GM10248 (cell line): ENCODE measurements at regions of chrX and their contacts with region 1.

Region 1: DNA sequence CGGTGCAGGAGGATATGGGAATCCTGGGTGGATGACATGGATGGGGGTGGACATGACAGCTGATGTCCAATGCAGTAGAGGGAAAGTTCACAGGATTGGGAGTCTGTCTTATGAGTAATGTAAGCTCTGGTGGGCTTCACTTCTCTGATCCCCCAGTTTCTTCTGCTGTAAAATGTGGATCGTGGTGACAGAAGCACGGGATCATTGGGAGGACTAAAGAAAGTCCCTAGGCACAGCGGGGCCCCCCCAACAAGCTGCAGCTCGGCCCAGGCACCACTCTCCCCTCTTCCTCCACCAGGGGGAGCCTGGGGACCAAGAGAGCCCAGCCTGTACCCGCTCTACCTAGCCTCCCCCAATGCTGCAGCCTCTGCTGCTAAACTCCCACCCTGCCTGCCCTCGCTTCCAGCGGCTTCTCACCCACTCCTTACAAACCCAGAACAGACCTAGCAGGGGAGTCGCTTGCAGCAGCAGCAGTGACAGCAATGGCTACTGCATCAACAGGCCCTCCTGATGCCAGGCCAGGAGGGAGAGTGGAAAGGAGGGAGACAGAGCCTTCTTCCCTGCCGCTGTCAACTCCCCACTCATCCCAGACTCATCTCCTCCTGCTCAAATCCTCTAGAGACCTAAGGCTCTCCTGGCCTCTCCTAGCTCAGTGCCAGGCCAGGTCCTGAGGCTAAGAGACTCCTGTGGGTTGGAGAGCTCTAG is 36.1 kb upstream of the IQSEC2 start:
- DNase-seq: peak; percentile 77
- CTCF ChIP-seq: peak; percentile 71

Region 2: DNA sequence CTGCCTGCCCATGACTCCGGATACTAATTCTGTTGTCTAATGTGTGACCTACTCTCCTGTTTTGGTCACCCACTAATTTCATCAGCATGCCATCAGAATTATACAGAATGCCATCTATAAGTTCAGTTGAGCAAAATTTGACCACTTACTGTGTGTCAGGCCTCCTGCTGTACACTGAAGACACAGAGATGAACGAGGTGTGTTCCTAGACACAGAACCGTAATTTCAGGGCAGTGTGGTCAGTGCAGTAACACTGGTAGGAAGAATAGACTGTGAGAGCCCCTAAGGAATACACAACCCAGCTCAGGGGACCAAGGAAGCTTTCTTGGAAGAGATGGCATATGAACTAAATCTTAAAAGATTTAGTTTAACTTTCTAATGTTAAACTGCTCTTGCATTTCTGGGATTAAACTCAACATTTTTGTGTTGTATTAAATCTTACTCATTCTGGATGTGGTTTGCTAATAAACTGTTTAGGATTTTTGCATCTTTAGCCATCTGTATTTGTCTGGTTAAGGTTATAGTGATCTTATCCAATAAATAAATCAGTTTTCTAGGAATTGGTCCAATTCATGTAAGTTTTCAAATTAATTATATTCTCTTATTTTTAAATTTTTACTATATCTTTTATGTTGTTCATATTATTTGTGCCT is 189.3 kb before region 1 on chrX:
- CTCF ChIA-PET with region 1: no interaction called
- POLR2A ChIA-PET with region 1: no interaction called
- DNase-seq: no peak
- CTCF ChIP-seq: no peak

Region 3: GRCh38 chrX:53239474-53239873 is 78.0 kb before region 1 on chrX:
- CTCF ChIA-PET with region 1: no interaction called
- POLR2A ChIA-PET with region 1: no interaction called
- DNase-seq: peak; percentile 38
- CTCF ChIP-seq: no peak

Region 4: DNA sequence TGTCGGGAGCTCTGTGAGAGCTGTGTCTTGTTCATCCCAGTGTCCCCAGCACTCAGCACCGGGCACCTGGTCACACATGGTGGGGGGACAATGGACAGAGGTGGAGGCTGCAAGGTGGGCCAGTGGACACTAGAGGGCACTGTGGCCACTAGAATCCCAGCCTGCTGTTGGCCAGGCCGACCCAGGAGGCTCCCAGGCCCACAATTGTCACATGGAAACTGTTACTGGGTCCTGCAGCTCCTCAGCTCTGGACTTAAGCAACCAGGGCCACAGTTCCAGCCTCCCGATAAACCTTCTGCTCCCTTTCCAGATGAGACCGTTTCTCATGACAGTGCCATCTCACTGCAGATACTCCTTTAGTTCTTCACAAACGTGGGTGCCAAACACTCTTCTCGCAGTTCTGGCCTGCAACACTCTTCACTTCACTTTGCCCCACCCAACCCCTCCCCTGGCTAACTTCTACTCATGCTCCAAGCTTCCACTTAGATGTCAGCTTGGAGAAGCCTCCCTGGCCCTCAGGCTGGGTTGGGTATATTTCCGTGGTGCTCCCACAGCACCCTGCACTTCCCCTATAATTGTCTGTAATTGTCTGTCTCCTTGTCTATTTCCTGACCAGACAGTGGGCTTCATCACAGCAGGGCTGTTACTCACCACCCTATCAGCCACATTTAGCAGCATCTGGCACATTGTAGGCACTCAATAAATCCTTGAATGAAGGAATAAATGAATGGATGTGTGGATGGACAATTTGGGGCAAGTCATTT is 32.7 kb before region 1 on chrX:
- CTCF ChIA-PET with region 1: interaction called, 12 read pairs
- POLR2A ChIA-PET with region 1: no interaction called
- DNase-seq: peak; percentile 73
- CTCF ChIP-seq: peak; percentile 63

Region 5: DNA sequence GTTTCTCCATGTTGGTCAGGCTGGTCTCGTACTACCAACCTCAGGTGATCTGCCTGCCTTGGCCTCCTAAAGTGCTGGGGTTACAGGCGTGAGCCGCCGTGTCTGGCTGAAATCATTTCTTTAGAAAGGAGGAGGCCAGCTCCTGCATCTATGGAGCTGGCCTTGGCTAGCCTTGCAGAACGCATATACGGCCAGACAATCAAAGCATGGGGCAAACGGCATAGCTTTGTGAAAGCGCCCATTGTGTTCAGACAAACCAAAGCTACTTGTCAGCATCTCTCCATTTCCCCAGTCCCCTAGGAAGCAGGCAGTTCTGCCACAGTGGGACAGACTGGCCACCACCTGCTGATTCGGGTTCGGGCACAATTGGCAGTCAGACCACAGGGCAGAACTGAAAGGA is 12.8 kb after region 1 on chrX:
- CTCF ChIA-PET with region 1: interaction called, 19 read pairs
- POLR2A ChIA-PET with region 1: no interaction called
- DNase-seq: no peak
- CTCF ChIP-seq: no peak

Region 6: GRCh38 chrX:53422086-53422860 is 104.8 kb after region 1 on chrX and contains the start of gene SMC1A:
- CTCF ChIA-PET with region 1: interaction called, 10 read pairs
- POLR2A ChIA-PET with region 1: no interaction called
- DNase-seq: peak; percentile 97
- CTCF ChIP-seq: no peak

Region 7: GRCh38 chrX:53433651-53434639 is 116.4 kb after region 1 on chrX and contains the start of gene HSD17B10:
- CTCF ChIA-PET with region 1: interaction called, 30 read pairs
- POLR2A ChIA-PET with region 1: no interaction called
- DNase-seq: peak; percentile 86
- CTCF ChIP-seq: no peak

Region 8: DNA sequence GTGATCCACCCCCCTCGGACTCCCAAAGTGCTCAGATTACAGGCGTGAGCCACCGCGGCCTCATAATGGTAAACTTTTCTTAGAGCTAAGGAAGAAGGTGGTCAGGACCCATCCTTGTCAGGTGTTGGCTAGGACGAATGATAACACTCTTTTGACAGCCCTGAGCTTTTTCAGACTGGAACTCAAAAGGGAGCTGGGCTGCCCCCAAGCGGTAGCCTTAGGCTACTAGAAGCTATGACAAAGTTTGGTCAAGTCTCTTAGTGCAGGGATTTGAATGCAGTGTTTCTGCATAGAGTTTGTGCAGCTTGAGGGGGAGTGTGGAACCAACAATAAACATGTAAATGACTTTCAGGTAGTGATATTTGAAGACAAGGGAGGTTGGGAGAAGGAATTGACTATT is 128.5 kb after region 1 on chrX:
- CTCF ChIA-PET with region 1: interaction called, 78 read pairs
- POLR2A ChIA-PET with region 1: no interaction called
- DNase-seq: peak; percentile 44
- CTCF ChIP-seq: peak; percentile 44

Region 9: DNA sequence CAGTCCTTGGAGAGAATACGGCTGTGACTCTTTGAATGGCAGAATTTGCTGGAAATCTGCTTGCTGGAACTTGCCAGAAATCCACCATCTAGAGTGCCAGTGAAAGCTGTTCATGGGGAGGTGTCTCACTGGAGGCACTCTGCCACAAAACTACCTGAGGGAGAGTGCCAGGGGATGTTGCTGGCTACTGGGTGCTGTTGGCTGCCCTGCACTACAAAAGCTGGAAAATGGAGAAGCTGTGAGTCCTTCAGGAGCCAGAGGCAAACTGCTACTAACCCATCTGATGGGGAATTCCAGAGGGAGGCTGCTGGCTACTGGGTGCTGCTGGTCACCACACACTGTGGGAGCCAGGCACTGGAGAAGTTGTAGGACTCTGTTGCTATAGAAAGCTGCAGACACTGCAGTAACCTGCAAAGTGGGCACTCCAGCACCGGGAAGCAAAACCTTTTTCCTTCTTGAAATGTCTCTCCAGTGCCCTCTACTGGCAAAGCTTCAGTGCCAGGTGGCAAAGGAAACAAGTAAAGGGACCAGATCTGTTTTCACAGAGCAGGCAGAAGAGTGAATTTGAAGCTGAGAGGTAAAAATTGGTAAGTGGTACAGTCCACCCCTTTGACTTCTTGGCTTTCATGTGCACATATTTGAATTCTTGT is 164.4 kb after region 1 on chrX:
- CTCF ChIA-PET with region 1: interaction called, 30 read pairs
- POLR2A ChIA-PET with region 1: no interaction called
- DNase-seq: peak; percentile 40
- CTCF ChIP-seq: peak; percentile 47